ENCODE measurements at regions of chr2 and their contacts with region 1.

Region 1: DNA sequence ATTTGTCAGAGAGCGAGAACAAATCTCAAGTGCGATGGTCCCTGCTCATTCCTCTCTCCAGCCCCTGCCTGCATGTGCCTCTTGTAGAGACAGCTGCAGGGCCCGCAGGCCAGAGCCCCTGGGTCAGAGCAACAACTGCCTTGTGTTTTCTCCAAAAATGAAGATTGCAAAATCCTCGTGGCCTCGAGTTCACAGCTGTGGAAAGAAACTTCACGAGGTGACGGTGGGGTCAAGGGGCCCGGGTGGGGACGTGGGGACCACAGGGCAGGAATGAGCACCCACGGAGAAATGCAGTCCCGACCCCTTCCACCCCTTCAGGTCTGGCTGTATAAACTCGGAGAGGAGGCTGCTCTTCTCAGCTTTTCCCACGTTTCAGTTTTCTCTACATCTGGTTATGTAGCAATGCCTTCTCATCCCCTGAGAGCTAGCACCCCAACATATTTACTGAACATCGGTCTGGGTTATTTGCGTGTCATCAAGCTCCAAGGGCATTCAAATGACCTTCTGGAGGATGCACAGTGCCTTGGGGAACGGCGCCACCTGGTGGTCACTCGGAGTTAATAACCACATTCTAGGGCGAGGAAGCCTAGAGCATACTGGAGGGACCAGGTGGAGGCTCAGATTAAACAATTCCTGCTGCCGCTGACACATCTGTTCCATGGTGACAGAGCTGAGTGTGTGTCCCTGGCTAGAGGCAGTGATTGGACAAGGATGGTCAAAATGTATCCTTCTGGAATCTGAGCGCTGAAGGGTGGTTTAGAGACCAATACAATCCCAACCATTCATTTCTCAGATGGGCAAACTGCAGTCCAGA is 91.4 kb upstream of the CYRIA start:
- DNase-seq: peak; percentile 66
- H3K4me3 Mint-ChIP-seq: no peak overlapping the region
- H3K27ac Mint-ChIP-seq: no peak overlapping the region
- H3K4me1 Mint-ChIP-seq: no peaks in the 10 kb centered on the region
- H3K27me3 Mint-ChIP-seq: peaks cover 12% of the 10 kb centered on the region
- CTCF ChIP-seq: peak; percentile 89

Region 2: DNA sequence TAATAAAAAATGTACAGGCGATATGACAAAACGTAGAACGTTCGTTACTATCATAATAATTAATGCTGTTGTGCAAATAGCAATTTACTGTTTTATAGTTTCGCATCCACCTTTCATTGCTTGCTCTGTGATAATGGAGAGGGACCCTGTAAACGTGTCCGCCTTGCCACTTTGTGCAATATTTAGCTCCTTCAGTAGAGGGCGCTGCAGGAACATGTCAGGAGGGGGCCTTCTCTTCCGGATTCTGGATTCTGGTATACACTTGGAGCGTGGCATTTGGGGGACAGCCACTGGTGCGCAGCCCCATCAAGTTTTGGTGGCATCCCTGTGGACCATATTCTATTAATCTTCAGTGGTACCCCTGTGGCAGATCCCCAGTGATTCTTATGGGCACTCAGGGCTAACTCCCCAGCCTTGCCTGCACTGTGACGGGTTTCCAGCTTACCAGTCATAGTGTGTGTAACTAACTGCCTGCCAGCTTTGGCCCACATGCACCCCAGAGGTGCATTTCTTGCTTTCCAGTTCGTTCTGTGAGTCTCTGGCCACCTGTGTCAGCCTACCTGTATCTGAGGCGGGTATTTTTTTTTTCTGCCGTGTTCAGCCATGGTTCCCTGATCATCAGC is 231.7 kb before region 1 on chr2:
- CTCF ChIA-PET with region 1: no interaction called
- POLR2A ChIA-PET with region 1: no interaction called
- intact Hi-C with region 1: loop called (anchors 1 kb)
- DNase-seq: peak; percentile 63
- H3K4me3 Mint-ChIP-seq: no peak overlapping the region
- H3K27ac Mint-ChIP-seq: no peak overlapping the region
- H3K4me1 Mint-ChIP-seq: no peaks in the 10 kb centered on the region
- H3K27me3 Mint-ChIP-seq: peaks cover 2% of the 10 kb centered on the region
- CTCF ChIP-seq: peak; percentile 54

Region 3: GRCh38 chr2:16608661-16609643 is 148.1 kb before region 1 on chr2:
- CTCF ChIA-PET with region 1: interaction called, 263 read pairs
- POLR2A ChIA-PET with region 1: interaction called, 15 read pairs
- intact Hi-C with region 1: loop called (anchors 1 kb)
- DNase-seq: peak; percentile 76
- H3K4me3 Mint-ChIP-seq: peak overlapping the region; percentile 73
- H3K27ac Mint-ChIP-seq: no peak overlapping the region
- H3K4me1 Mint-ChIP-seq: no peaks in the 10 kb centered on the region
- H3K27me3 Mint-ChIP-seq: peaks cover 5% of the 10 kb centered on the region
- CTCF ChIP-seq: peak; percentile 95

Region 4: GRCh38 chr2:16625201-16625729 is 131.8 kb before region 1 on chr2:
- CTCF ChIA-PET with region 1: interaction called, 168 read pairs
- POLR2A ChIA-PET with region 1: no interaction called
- intact Hi-C with region 1: no loop called
- DNase-seq: no peak
- H3K4me3 Mint-ChIP-seq: no peak overlapping the region
- H3K27ac Mint-ChIP-seq: no peak overlapping the region
- H3K4me1 Mint-ChIP-seq: peaks cover 6% of the 10 kb centered on the region
- H3K27me3 Mint-ChIP-seq: no peaks in the 10 kb centered on the region
- CTCF ChIP-seq: no peak

Region 5: DNA sequence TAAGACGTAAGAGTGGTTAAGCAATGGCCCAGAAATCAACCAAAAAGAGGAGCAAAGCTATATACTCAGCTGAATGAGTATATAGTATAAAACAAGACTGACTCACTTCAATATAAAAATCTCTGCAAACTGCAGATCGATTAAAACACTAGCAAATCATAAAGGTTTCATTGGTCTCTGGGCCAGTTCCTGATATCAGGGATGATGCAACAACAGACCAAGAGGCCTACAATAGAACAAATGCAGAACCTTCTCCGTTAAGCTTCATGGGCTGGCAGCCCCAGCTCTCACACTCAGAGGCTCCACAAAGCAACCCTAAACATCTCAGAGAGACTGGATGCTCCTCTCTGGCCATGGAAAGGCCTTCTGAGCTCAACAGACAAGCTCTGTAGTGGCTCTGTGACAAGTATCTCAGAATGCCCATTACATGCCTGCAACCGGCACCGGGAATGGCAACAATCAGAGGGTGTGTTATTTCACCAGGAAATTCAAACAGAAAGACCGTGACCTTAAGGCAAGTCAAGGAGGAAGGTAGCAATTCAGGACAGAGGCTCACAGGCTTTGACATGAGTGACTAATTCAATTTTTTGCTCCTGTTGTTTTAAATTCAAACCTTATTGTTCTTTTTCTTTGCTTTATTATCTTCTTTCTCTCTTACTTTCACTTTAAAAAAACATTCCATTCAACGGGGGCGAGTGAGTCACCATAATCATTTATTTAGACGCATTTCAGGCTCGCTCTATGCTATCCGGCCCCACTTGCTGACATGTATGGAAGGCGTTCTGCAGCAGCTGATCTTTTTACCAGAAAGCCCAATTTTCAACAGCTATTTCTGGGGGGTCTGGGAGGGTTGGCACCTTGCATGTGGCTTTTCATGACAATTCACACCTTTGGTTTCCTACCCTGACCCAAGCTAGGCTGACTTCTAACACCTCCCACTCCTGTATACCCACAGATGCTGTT is 106.5 kb before region 1 on chr2:
- CTCF ChIA-PET with region 1: interaction called, 30 read pairs
- POLR2A ChIA-PET with region 1: interaction called, 3 read pairs
- intact Hi-C with region 1: no loop called
- DNase-seq: peak; percentile 61
- H3K4me3 Mint-ChIP-seq: peak overlapping the region; percentile 30
- H3K27ac Mint-ChIP-seq: peak overlapping the region; percentile 76
- H3K4me1 Mint-ChIP-seq: peaks cover 31% of the 10 kb centered on the region
- H3K27me3 Mint-ChIP-seq: no peaks in the 10 kb centered on the region
- CTCF ChIP-seq: no peak

Region 6: DNA sequence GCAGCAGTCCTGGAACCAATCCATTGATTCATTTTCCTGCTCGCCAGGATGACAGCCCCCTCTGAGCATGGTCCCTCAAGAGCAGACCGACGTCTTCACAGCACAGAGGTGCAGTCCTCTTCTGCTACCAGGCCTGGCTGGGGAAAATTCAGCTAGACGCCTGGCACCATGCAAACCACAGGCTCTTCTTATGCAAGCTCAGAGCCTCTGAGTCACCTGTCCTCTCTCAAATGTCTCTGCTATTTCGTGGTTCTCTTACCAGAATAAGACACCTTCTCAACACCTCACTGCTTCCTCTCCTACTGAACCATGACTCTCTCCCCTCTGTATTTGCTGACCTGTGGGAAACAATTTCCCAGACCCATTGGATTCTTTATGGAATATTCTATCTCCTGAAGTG is 11.6 kb before region 1 on chr2:
- CTCF ChIA-PET with region 1: interaction called, 44 read pairs
- POLR2A ChIA-PET with region 1: no interaction called
- intact Hi-C with region 1: no loop called
- DNase-seq: peak; percentile 84
- H3K4me3 Mint-ChIP-seq: no peak overlapping the region
- H3K27ac Mint-ChIP-seq: no peak overlapping the region
- H3K4me1 Mint-ChIP-seq: peaks cover 18% of the 10 kb centered on the region
- H3K27me3 Mint-ChIP-seq: no peaks in the 10 kb centered on the region
- CTCF ChIP-seq: no peak

Measured in MCF 10A (cell line).